ENCODE measurements at regions of chr20 and their contacts with region 1.

Region 1: DNA sequence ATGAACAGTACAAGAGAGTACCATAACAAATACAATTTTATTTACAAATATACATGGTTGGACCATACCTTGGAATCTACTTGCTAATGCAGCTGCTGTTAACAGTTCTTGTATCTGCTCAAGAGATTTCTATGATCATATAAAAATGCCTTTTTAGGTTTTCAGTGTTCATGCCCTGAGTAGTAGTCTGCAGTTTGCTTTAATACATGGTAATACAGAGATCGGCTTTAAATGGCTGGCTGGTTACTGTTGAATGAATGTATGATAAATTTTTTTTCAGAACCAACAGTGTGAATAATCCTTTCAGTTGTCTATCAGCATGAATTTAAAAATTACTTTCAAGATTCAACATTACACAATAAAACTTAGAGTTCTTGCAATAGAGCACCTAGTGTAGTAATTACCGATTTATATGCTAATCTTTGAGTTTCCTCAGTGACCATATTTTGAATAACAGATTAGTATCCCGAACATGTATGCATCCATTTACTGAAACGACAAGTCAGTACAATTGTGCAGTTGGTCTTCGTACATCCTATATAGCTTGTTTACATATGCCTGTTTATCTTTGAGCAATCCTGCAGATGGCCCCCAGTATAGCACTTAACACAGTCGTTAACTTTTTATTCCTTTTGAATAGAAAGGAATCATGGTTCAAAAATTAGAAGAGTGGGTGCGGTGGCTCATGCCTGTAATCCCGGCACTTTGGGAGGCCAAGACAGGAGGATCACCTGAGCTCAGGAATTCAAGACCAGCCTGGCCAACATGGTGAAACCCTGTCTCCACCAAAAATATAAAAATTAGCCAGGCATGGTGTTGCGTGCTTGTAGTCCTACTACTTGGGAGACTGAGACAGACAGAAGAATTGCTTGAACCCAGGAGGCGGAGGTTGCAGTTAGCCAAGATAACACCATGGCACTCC is 6.4 kb downstream of the SRSF6 start:
- DNase-seq: no peak
- ATAC-seq: no peak
- H3K4me3 ChIP-seq: no peak overlapping the region
- H3K27ac ChIP-seq: no peak overlapping the region
- H3K4me1 ChIP-seq: peaks cover under 1% of the 10 kb centered on the region; the same call in 1 of the 2 replicates
- H3K27me3 ChIP-seq: no peaks in the 10 kb centered on the region
- CTCF ChIP-seq: no peak
- POLR2A ChIP-seq: peak; percentile 49
- RAD21 ChIP-seq: no peak

Region 2: GRCh38 chr20:43590392-43591323 is 126.5 kb after region 1 on chr20 and contains the start of gene IFT52:
- CTCF ChIA-PET with region 1: no interaction called
- POLR2A ChIA-PET with region 1: no interaction called
- dilution Hi-C with region 1: no loop called
- in situ Hi-C with region 1: no loop called
- intact Hi-C with region 1: loop called (anchors 2 kb)
- DNase-seq: peak; percentile 88
- ATAC-seq: peak; percentile 98
- H3K4me3 ChIP-seq: peak within 1 kb of the TSS; percentile 96
- H3K27ac ChIP-seq: peak within 1 kb of the TSS; percentile 83
- H3K4me1 ChIP-seq: peaks cover 3% of the 10 kb centered on the region; the same call in 1 of the 2 replicates
- H3K27me3 ChIP-seq: no peaks in the 10 kb centered on the region
- CTCF ChIP-seq: no peak
- POLR2A ChIP-seq: peak; percentile 45; the same call in 1 of the 2 replicates
- RAD21 ChIP-seq: no peak
- total RNA-seq, gene IFT52: 55.6 and 60.8 TPM in 2 replicates

Region 3: DNA sequence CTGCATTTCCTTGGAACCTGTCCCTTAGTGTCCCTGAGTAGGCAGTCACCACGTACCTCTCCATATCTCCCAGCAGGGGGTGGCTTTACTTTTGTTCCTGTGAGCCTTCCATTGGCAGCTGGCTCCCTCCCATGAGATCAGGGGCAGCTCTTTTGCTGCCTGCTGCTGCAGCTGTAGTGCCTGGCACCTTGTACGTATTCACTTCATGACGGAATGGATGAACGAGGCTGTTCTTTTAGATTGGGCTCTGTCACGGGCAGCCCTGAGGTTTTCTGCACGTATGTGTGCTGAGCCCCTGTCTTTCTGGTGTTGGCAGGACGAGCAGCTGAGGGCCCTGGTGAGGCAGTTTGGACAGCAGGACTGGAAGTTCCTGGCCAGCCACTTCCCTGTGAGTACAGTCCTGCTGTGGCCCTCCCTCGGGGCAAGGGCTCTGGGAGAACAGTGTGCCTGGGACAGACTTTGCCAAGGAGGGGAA is 217.4 kb after region 1 on chr20:
- CTCF ChIA-PET with region 1: no interaction called
- POLR2A ChIA-PET with region 1: interaction called, 14 read pairs
- dilution Hi-C with region 1: no loop called
- in situ Hi-C with region 1: no loop called
- intact Hi-C with region 1: no loop called
- DNase-seq: no peak
- ATAC-seq: no peak
- H3K4me3 ChIP-seq: no peak overlapping the region
- H3K27ac ChIP-seq: no peak overlapping the region
- H3K4me1 ChIP-seq: no peaks in the 10 kb centered on the region
- H3K27me3 ChIP-seq: no peaks in the 10 kb centered on the region
- CTCF ChIP-seq: no peak
- POLR2A ChIP-seq: no peak
- RAD21 ChIP-seq: no peak

Measured in IMR-90 (cell line).